ENCODE measurements at regions of chr6 and their contacts with region 1.

Region 1: DNA sequence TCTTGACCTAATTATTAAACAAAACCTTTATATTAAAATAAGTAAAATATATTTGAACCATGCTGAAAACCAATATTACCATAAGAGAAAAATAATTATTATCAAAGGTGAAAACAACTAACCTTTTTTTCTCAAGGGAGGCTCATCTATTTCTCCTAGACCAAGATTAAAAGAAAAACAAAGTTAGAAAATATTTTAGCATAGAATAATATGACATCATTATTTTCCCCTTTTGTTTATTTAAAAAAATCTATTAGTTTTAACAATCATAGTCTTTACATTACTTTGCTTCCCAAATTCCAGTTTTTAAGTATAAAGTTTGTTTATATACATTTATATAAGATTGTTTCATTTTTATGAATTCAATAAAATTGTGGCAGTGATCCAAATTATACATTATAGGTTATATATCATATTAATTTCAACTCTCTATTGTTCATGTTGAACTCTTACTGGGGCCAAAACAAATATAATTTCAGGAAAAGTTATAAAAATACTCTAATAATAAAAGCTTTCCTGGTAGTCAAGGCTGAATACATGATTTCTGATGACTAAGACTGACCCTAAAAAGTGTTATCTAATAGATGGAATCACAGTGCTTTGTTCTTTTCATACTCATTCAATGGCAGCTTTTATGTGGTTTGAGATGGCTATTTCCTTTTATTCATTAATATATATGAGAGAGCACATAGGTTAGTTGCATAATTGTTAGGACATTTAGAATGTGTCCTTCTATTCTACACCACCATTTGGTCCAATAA is 89.4 kb downstream of the TRDN start:
- DNase-seq: no peak
- ATAC-seq: no peak
- H3K4me3 ChIP-seq: no peak overlapping the region
- H3K4me3 Mint-ChIP-seq: no peak overlapping the region
- H3K27ac ChIP-seq: no peak overlapping the region
- H3K27ac Mint-ChIP-seq: no peak overlapping the region
- H3K4me1 ChIP-seq: no peaks in the 10 kb centered on the region
- H3K4me1 Mint-ChIP-seq: no peaks in the 10 kb centered on the region
- H3K27me3 ChIP-seq: no peaks in the 10 kb centered on the region
- H3K27me3 Mint-ChIP-seq: no peaks in the 10 kb centered on the region

Region 2: DNA sequence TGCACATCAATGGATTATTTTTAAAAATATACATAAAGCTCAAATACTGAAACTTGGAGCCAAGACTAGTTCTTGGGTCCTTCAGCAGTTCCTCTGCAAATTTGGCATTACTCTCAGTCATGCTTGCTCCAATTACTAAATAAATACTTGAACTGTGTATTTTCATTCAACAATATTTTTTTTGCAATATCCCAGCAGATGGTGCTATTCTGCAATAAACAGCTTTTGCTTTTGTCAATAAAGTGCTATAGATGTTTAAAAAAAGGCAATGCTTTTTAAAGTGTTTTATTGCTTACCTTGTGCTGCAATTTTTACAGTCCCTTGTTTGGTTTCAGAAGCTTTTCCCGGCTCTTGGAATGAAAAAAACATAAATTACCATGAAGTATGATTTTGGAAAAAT is 154.1 kb before region 1 on chr6:
- CTCF ChIA-PET with region 1: no interaction called
- POLR2A ChIA-PET with region 1: no interaction called
- DNase-seq: no peak
- ATAC-seq: no peak
- H3K4me3 ChIP-seq: no peak overlapping the region
- H3K4me3 Mint-ChIP-seq: no peak overlapping the region
- H3K27ac ChIP-seq: no peak overlapping the region
- H3K27ac Mint-ChIP-seq: no peak overlapping the region
- H3K4me1 ChIP-seq: no peaks in the 10 kb centered on the region
- H3K4me1 Mint-ChIP-seq: no peaks in the 10 kb centered on the region
- H3K27me3 ChIP-seq: no peaks in the 10 kb centered on the region
- H3K27me3 Mint-ChIP-seq: no peaks in the 10 kb centered on the region

Region 3: DNA sequence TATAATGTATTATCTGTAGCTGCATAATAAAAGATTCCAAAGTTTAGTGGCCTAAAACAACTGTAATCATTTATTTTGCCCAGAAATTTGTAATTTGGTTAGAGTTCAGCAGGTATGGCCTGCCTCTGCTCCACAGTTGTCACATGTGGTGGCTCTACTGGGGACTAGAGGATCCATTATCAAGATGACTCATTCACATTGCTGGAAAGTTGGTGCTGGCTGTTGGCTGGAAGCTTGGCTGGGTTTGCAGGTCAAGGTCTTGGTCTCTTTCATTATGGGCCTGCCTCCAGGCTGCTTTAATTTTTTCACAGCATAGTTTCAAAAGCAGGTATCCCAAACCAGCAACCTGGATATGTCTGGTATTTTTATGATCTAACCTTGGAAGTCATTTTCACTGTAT is 71.8 kb after region 1 on chr6:
- CTCF ChIA-PET with region 1: no interaction called
- POLR2A ChIA-PET with region 1: interaction called in 1 of 2 experiments, 13 read pairs
- DNase-seq: no peak
- ATAC-seq: no peak
- H3K4me3 ChIP-seq: no peak overlapping the region
- H3K4me3 Mint-ChIP-seq: no peak overlapping the region
- H3K27ac ChIP-seq: no peak overlapping the region
- H3K27ac Mint-ChIP-seq: no peak overlapping the region
- H3K4me1 ChIP-seq: no peaks in the 10 kb centered on the region
- H3K4me1 Mint-ChIP-seq: no peaks in the 10 kb centered on the region
- H3K27me3 ChIP-seq: no peaks in the 10 kb centered on the region
- H3K27me3 Mint-ChIP-seq: no peaks in the 10 kb centered on the region

Region 4: GRCh38 chr6:123777563-123777962 is 230.2 kb after region 1 on chr6:
- CTCF ChIA-PET with region 1: no interaction called
- POLR2A ChIA-PET with region 1: no interaction called
- DNase-seq: no peak
- ATAC-seq: no peak
- H3K4me3 ChIP-seq: no peak overlapping the region
- H3K4me3 Mint-ChIP-seq: no peak overlapping the region
- H3K27ac ChIP-seq: no peak overlapping the region
- H3K27ac Mint-ChIP-seq: no peak overlapping the region
- H3K4me1 ChIP-seq: no peaks in the 10 kb centered on the region
- H3K4me1 Mint-ChIP-seq: no peaks in the 10 kb centered on the region
- H3K27me3 ChIP-seq: no peaks in the 10 kb centered on the region
- H3K27me3 Mint-ChIP-seq: no peaks in the 10 kb centered on the region

Measured in T-cell (primary cell).